Activated T-helper 2 cell treated with anti-CD3 and anti-CD28 coated beads, Interferon-gamma antibody, Interleukin-2, Interleukin-4, amounts not matched to agents 10 μg/mL and 5 μg/mL and 100 μg/mL, durations not matched to agents 14 hours and 24 hours and 36 hours (primary cell): ENCODE measurements at regions of chr2 and their contacts with region 1.

Region 1: DNA sequence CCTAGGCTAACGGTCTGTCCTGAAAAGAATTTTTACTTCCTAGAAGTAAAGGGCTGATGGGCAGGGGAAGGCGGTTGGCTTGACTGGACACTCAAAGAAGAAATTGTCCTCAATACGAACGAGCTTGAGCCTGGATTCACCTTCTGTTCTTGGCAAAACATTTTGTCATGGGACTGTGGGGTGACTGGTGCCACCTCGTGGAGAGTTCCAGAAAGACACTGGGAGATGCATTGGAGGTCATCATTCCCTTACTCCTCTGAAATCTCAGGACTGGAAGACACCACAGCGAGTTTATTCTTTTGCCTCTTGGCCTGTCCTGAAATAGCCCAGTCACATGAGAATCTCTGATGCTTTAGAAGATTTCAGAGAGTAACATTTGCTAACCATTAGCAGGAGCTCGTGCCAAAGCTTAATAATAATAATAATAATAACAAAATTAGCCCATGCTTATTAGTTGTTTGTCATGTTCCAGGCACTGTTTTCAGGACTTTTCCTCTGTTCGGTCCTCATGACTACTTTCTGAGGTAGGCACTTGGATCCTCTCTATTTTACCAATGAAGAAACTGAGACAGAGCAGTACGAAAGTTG is 44.5 kb downstream of the TMEM182 start:
- DNase-seq: no peak
- H3K4me3 Mint-ChIP-seq: no peak overlapping the region
- H3K27ac Mint-ChIP-seq: no peak overlapping the region
- H3K4me1 Mint-ChIP-seq: peaks cover 9% of the 10 kb centered on the region
- H3K27me3 Mint-ChIP-seq: peaks cover 8% of the 10 kb centered on the region

Region 2: GRCh38 chr2:102753563-102754159 is 52.7 kb before region 1 on chr2:
- intact Hi-C with region 1: loop called (anchors 1 kb)
- DNase-seq: no peak
- H3K4me3 Mint-ChIP-seq: no peak overlapping the region
- H3K27ac Mint-ChIP-seq: no peak overlapping the region
- H3K4me1 Mint-ChIP-seq: no peaks in the 10 kb centered on the region
- H3K27me3 Mint-ChIP-seq: peaks cover 4% of the 10 kb centered on the region

Region 3: DNA sequence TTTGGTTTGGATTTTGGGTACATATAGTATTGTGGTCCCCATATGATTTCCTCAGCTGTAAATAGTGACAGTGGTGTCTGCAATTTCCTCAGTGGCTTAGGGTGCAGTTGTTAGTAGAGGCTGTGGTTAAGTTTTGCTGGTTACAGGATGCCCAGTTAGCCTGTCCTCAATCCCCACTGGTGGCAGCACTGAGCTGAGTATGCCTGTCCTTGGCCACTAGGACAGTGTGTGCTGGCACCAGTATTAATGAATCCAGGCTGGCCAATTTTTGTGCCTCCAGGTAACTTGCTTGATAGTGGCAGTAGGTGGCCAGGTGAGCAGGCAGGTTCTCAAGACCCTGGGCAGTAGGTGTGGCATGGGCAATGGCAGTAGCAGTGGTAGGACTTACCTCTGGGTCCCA is 928.6 kb after region 1 on chr2:
- intact Hi-C with region 1: no loop called
- DNase-seq: no peak
- H3K4me3 Mint-ChIP-seq: no peak overlapping the region
- H3K27ac Mint-ChIP-seq: no peak overlapping the region
- H3K4me1 Mint-ChIP-seq: no peaks in the 10 kb centered on the region
- H3K27me3 Mint-ChIP-seq: no peaks in the 10 kb centered on the region